GM12878 (cell line): ENCODE measurements at regions of chr3 and their contacts with region 1.

Region 1: DNA sequence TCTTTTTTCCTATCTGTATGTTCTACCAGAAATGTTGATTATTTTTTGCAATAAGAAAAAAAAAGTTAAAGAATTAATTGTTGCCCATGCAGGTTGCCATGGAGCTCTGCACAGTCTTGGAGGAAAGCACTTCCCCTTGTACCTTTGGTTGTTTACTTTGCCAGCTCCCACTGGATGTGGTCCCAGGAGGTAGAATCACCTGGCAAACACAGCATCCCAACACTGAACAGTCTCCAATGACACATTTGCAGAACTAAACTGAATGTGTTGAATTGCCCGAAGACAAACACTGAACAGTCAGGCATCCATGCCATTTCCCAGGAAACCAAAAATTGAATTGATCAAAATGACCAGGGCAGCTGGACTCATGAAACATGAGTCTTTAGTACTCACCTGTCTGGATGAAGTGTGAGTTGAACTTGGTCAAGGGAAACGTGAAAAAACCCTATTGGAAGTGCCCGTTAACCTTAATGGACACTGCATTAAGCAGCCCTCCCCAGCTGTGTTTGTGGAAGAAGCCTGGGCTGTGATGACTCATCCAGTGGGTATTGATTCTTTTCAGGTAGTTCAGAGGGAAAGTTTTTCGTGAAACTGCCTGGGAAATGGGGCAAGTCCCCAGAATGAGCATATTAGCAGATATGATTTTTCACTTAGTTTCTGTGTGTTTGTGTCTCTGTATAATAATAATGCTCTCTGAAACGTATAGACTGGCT is 284.7 kb upstream of the STT3B start:
- DNase-seq: peak; percentile 77
- ATAC-seq: peak; percentile 60
- H3K4me3 ChIP-seq: peak overlapping the region; percentile 47; the same call in 1 of the 2 replicates
- H3K27ac ChIP-seq: peak overlapping the region; percentile 86
- H3K4me1 ChIP-seq: peaks cover 40% of the 10 kb centered on the region
- H3K27me3 ChIP-seq: no peaks in the 10 kb centered on the region
- CTCF ChIP-seq: no peak
- EP300 ChIP-seq: peak in 1 of 2 experiments; percentile 74; a peak in 1 of 4 replicates
- POLR2A ChIP-seq: no peak
- RAD21 ChIP-seq: no peak

Region 2: GRCh38 chr3:30693470-30694120 is 554.4 kb before region 1 on chr3:
- CTCF ChIA-PET with region 1: no interaction called
- POLR2A ChIA-PET with region 1: no interaction called
- RAD21 ChIA-PET with region 1: no interaction called
- SMC1A ChIA-PET with region 1: no interaction called
- in situ Hi-C with region 1: no loop called
- intact Hi-C with region 1: no loop called
- DNase-seq: peak; percentile 16
- ATAC-seq: peak; percentile 98
- H3K4me3 ChIP-seq: no peak overlapping the region
- H3K27ac ChIP-seq: no peak overlapping the region
- H3K4me1 ChIP-seq: no peaks in the 10 kb centered on the region
- H3K27me3 ChIP-seq: no peaks in the 10 kb centered on the region; a peak in 1 of 4 replicates
- CTCF ChIP-seq: peak; percentile 72 to 84 (median 79)
- EP300 ChIP-seq: no peak
- POLR2A ChIP-seq: no peak
- RAD21 ChIP-seq: peak; percentile 98

Region 3: DNA sequence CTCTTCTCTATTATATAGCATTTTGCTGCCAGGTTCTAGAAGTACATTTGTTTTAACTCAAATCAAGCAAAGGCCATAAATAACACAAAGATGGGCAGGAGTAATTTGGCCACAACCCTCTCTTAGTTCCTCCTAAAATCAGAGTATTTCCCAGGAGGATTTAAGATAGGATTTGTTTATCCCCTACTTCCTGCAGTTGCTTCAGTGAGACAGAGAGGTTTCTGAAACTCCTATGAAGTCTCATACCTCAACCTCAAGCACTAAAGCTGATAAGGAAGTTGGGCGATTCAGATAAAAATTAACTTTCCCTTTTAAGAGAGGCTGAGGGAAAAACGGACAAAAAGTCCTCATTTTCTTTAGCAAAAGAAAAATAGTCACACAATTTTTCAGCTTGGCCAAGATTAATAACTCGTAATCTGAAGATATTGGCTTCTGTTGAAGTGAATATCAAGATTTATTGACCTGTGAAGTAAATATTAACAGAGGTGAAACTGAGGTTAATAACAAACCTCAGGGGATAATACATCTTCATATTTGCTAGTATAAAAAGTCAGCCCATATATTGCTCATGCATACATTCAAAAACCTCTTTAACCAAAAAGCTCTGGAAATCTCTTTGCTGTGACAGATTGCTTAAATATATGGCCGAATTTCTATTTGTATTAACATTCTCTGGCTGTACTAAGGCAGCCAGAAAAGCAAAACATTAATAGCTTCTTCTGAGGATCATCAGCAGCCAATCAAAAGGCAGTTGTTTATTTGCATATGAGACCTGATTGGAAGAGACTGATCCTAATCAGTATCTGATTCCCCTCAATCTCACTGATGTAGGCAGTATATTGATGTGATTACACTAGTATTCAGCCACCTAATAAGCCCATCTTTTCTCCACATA is 262.9 kb before region 1 on chr3:
- CTCF ChIA-PET with region 1: no interaction called
- POLR2A ChIA-PET with region 1: no interaction called
- RAD21 ChIA-PET with region 1: no interaction called
- SMC1A ChIA-PET with region 1: interaction called, 7 read pairs
- in situ Hi-C with region 1: no loop called
- intact Hi-C with region 1: loop called (anchors 10 kb)
- DNase-seq: no peak
- ATAC-seq: peak; percentile 73
- H3K4me3 ChIP-seq: no peak overlapping the region
- H3K27ac ChIP-seq: 0 out of 2 replicates have a peak overlapping the region, but pooled peaks have one; percentile 6
- H3K4me1 ChIP-seq: 0 out of 2 replicates have a peak, but pooled peaks cover 3% of the 10 kb centered on the region
- H3K27me3 ChIP-seq: no peaks in the 10 kb centered on the region
- CTCF ChIP-seq: no peak
- EP300 ChIP-seq: no peak
- POLR2A ChIP-seq: no peak
- RAD21 ChIP-seq: no peak

Region 4: DNA sequence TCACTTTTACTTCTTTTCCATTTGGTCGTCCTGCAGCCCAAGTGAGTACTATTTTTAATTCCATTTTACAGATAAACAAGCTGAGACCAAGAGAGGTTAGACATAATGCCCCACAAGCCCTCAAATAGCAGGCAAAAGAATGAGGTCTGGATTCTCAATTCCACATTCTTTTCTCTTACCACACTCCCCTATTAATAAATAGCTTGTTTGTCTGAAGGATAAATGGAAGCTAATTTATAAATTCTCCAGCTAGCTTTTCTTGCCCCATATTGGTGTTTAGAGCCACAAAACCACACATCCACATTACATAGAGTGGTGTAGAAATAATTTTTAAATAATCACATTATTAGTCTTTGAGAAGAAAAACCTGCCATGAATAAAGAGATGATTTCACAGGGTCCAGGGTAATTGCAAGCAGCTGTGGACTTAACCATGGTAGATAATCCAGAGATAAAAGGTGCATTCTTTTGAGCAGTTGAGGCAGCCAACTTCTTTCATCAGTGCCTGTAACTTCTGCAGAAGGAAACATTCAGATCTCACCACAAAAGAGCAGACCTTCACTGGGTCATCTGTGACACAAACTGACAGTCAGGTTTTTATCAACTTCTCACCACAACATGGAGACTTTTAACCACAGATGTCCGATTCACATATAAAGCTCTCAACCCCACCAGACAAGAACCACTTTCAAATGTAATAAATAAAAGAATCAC is 28.7 kb before region 1 on chr3:
- CTCF ChIA-PET with region 1: interaction called, 7 read pairs
- POLR2A ChIA-PET with region 1: interaction called, 109 read pairs
- RAD21 ChIA-PET with region 1: interaction called, 381 read pairs
- SMC1A ChIA-PET with region 1: interaction called, 378 read pairs
- in situ Hi-C with region 1: no loop called
- intact Hi-C with region 1: loop called (anchors 2 kb)
- DNase-seq: peak; percentile 84
- ATAC-seq: peak; percentile 84
- H3K4me3 ChIP-seq: no peak overlapping the region
- H3K27ac ChIP-seq: peak overlapping the region; percentile 51
- H3K4me1 ChIP-seq: peaks cover 28% of the 10 kb centered on the region
- H3K27me3 ChIP-seq: no peaks in the 10 kb centered on the region
- CTCF ChIP-seq: no peak
- EP300 ChIP-seq: peak; percentile 57 to 86; a peak in 3 of 4 replicates
- POLR2A ChIP-seq: no peak
- RAD21 ChIP-seq: peak; percentile 30

Region 5: GRCh38 chr3:31232055-31233025 is 15.7 kb before region 1 on chr3:
- CTCF ChIA-PET with region 1: interaction called, 24 read pairs
- POLR2A ChIA-PET with region 1: interaction called, 109 read pairs
- RAD21 ChIA-PET with region 1: interaction called, 381 read pairs
- SMC1A ChIA-PET with region 1: interaction called, 378 read pairs
- in situ Hi-C with region 1: no loop called
- intact Hi-C with region 1: loop called (anchors 2 kb)
- DNase-seq: no peak
- ATAC-seq: peak; percentile 23
- H3K4me3 ChIP-seq: no peak overlapping the region
- H3K27ac ChIP-seq: peak overlapping the region; percentile 57
- H3K4me1 ChIP-seq: peaks cover 37% of the 10 kb centered on the region
- H3K27me3 ChIP-seq: no peaks in the 10 kb centered on the region
- CTCF ChIP-seq: no peak
- EP300 ChIP-seq: no peak
- POLR2A ChIP-seq: no peak
- RAD21 ChIP-seq: no peak

Region 6: GRCh38 chr3:31448035-31448881 is 200.3 kb after region 1 on chr3:
- CTCF ChIA-PET with region 1: interaction called, 6 read pairs
- POLR2A ChIA-PET with region 1: interaction called, 3 read pairs
- RAD21 ChIA-PET with region 1: interaction called, 3 read pairs
- SMC1A ChIA-PET with region 1: interaction called, 8 read pairs
- in situ Hi-C with region 1: no loop called
- intact Hi-C with region 1: loop called (anchors 5 kb)
- DNase-seq: no peak
- ATAC-seq: peak; percentile 96
- H3K4me3 ChIP-seq: 0 out of 2 replicates have a peak overlapping the region, but pooled peaks have one; percentile 42
- H3K27ac ChIP-seq: peak overlapping the region; percentile 79
- H3K4me1 ChIP-seq: peaks cover 34% of the 10 kb centered on the region
- H3K27me3 ChIP-seq: no peaks in the 10 kb centered on the region
- CTCF ChIP-seq: peak; percentile 43 to 73 (median 67)
- EP300 ChIP-seq: no peak
- POLR2A ChIP-seq: no peak
- RAD21 ChIP-seq: peak; percentile 71

Region 7: GRCh38 chr3:31505371-31506048 is 257.5 kb after region 1 on chr3:
- CTCF ChIA-PET with region 1: no interaction called
- POLR2A ChIA-PET with region 1: no interaction called
- RAD21 ChIA-PET with region 1: interaction called, 6 read pairs
- SMC1A ChIA-PET with region 1: interaction called, 10 read pairs
- in situ Hi-C with region 1: no loop called
- intact Hi-C with region 1: no loop called
- DNase-seq: no peak
- ATAC-seq: no peak
- H3K4me3 ChIP-seq: no peak overlapping the region
- H3K27ac ChIP-seq: no peak overlapping the region
- H3K4me1 ChIP-seq: no peaks in the 10 kb centered on the region
- H3K27me3 ChIP-seq: no peaks in the 10 kb centered on the region; a peak in 1 of 4 replicates
- CTCF ChIP-seq: no peak
- EP300 ChIP-seq: no peak
- POLR2A ChIP-seq: no peak
- RAD21 ChIP-seq: no peak